GM12878 (cell line): ENCODE measurements at regions of chr10 and their contacts with region 1.

Region 1: DNA sequence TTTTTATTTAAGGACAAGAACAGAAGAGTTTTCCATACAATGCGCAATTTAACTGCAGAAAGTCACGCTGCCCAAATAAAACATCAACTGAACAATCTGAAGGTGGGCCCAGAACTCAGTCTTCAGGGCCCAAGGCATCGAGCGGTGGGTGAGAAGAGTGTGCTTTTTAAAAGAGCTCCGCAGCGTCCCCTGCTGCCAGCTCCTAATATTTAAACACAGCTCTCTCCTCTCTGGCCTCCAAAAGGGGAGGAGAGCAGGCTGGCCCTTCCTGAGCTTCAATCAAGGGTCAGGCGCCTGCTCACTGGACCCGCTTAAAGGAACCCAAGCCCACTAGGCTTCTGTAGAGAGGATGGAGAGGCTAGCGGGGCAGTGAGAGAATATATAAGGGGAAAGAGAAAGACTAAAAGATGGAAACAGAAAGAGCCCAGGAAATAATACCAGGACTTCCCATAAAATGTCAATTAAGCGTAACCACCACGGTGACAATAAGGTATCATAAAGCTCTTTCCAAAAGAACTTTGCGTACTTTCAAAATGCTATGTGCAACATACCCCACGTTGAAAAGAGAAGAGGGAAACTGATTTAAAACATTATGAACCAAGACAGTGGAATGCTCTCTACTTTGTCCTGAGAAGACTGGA is 2.8 kb downstream of the FAM53B start:
- DNase-seq: no peak
- ATAC-seq: peak; percentile 77
- H3K4me3 ChIP-seq: peak overlapping the region; percentile 84
- H3K27ac ChIP-seq: peak overlapping the region; percentile 57
- H3K4me1 ChIP-seq: peaks cover 48% of the 10 kb centered on the region
- H3K27me3 ChIP-seq: no peaks in the 10 kb centered on the region
- CTCF ChIP-seq: peak; percentile 81 to 91 (median 88); a peak in 5 of 6 replicates
- EP300 ChIP-seq: no peak
- POLR2A ChIP-seq: no peak
- RAD21 ChIP-seq: peak; percentile 86

Region 2: GRCh38 chr10:123994417-123995081 is 746.9 kb before region 1 on chr10:
- CTCF ChIA-PET with region 1: no interaction called
- POLR2A ChIA-PET with region 1: no interaction called
- RAD21 ChIA-PET with region 1: no interaction called
- SMC1A ChIA-PET with region 1: no interaction called
- in situ Hi-C with region 1: no loop called
- intact Hi-C with region 1: loop called (anchors 10 kb)
- DNase-seq: no peak
- ATAC-seq: peak; percentile 91
- H3K4me3 ChIP-seq: peak overlapping the region; percentile 35; the same call in 1 of the 2 replicates
- H3K27ac ChIP-seq: no peak overlapping the region
- H3K4me1 ChIP-seq: peaks cover 3% of the 10 kb centered on the region; the same call in 1 of the 2 replicates
- H3K27me3 ChIP-seq: peaks cover 3 to 7% of the 10 kb centered on the region in 2 experiments; a peak in 3 of 4 replicates
- CTCF ChIP-seq: peak; percentile 94 to 97 (median 94)
- EP300 ChIP-seq: no peak
- POLR2A ChIP-seq: no peak
- RAD21 ChIP-seq: peak; percentile 86

Region 3: DNA sequence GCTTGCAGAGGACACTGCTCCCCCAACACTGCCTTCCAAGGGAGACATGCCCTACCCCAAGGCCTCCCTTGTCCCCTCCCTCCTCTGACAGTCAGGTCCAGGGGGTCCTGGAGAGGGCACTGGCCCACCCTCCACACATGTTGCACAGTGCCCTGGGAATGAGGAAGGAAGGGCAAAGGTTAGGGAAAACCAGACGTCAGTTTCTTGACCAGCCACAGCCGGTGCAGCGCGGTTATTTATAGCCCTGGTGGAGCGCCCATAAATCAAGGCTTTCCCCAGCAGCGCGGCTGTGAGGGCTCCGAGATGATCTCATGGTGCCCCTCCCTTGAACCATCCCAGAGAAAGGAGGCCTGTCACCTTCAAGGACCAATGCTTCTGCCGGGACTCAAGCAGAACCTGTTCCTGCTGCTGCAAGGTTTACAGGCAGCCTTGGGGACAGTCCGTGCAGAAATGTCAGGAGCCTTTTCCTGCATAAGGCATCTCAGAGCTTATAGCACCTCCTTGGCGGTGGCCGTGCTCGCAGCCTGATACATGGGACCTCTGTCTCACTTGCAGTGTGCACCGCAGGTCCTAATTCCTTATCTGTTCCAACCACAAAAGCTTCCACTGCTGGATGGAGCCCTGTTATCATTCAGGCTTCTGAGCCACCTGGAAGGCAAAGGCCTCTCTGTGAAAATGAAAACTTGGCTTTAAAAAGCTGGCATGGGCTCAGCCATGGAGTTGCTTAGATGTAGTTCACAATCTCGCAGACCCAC is 152.5 kb before region 1 on chr10:
- CTCF ChIA-PET with region 1: interaction called, 4 read pairs
- POLR2A ChIA-PET with region 1: no interaction called
- RAD21 ChIA-PET with region 1: interaction called, 10 read pairs
- SMC1A ChIA-PET with region 1: interaction called, 4 read pairs
- in situ Hi-C with region 1: no loop called
- intact Hi-C with region 1: no loop called
- DNase-seq: no peak
- ATAC-seq: peak; percentile 38
- H3K4me3 ChIP-seq: no peak overlapping the region
- H3K27ac ChIP-seq: no peak overlapping the region
- H3K4me1 ChIP-seq: peaks cover 10% of the 10 kb centered on the region
- H3K27me3 ChIP-seq: no peaks in the 10 kb centered on the region; a peak in 1 of 4 replicates
- CTCF ChIP-seq: no peak
- EP300 ChIP-seq: no peak
- POLR2A ChIP-seq: no peak
- RAD21 ChIP-seq: no peak

Region 4: DNA sequence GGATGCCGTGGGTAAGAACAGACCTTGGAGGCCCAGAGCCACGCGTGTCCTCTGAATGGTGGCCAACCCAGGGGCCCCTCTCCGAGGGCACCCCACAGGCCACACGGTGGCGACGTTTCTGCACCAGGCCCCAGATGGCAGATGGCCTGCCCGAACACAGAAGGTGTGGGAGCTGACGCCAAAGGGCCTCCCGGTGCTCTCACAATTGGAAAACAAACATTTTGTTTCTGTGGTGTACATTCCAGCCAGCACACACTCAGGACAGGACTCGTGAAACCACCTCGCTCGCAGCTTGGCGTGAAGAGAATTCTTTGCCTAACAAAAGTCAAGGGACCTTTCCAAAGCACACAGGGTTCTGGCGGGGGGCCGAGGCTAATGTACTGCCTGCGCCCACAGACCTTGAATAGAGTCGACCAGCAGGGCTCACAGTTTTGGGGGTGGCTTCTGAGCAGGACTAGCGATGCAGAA is 109.3 kb before region 1 on chr10:
- CTCF ChIA-PET with region 1: interaction called, 44 read pairs
- POLR2A ChIA-PET with region 1: no interaction called
- RAD21 ChIA-PET with region 1: interaction called, 23 read pairs
- SMC1A ChIA-PET with region 1: interaction called, 6 read pairs
- in situ Hi-C with region 1: no loop called
- intact Hi-C with region 1: loop called (anchors 5 kb)
- DNase-seq: no peak
- ATAC-seq: peak; percentile 49
- H3K4me3 ChIP-seq: no peak overlapping the region
- H3K27ac ChIP-seq: no peak overlapping the region
- H3K4me1 ChIP-seq: peaks cover 6% of the 10 kb centered on the region
- H3K27me3 ChIP-seq: no peaks in the 10 kb centered on the region
- CTCF ChIP-seq: peak; percentile 5 to 27 (median 26); a peak in 1 of 6 replicates
- EP300 ChIP-seq: no peak
- POLR2A ChIP-seq: no peak
- RAD21 ChIP-seq: peak; percentile 40; the same call in 1 of the 2 replicates

Region 5: DNA sequence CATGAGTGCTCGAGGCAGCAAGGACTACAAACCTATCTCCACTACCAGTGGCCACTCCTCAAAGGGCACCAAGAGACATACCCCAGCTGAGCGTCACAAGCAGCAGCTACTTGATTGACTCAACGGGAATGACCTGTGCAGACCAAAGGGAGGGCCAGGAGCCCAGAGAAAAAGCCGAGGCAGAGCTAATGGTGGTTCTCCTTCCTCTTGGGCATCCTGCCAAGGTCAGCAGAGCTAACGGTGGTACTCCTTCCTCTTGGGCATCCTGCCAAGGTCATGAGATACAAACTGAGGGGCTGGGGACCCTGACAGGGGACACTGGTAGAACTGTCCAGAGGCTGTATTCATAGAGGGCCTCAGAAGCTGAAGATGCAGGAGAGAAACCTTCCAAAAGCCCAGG is 57.6 kb before region 1 on chr10:
- CTCF ChIA-PET with region 1: interaction called, 106 read pairs
- POLR2A ChIA-PET with region 1: interaction called, 46 read pairs
- RAD21 ChIA-PET with region 1: interaction called, 130 read pairs
- SMC1A ChIA-PET with region 1: interaction called, 133 read pairs
- in situ Hi-C with region 1: no loop called
- intact Hi-C with region 1: loop called (anchors 2 kb)
- DNase-seq: no peak
- ATAC-seq: no peak
- H3K4me3 ChIP-seq: no peak overlapping the region
- H3K27ac ChIP-seq: no peak overlapping the region
- H3K4me1 ChIP-seq: peaks cover 38% of the 10 kb centered on the region
- H3K27me3 ChIP-seq: no peaks in the 10 kb centered on the region
- CTCF ChIP-seq: no peak
- EP300 ChIP-seq: no peak
- POLR2A ChIP-seq: no peak
- RAD21 ChIP-seq: no peak

Region 6: GRCh38 chr10:124719213-124719851 is 22.1 kb before region 1 on chr10:
- CTCF ChIA-PET with region 1: interaction called, 319 read pairs
- POLR2A ChIA-PET with region 1: interaction called, 134 read pairs
- RAD21 ChIA-PET with region 1: interaction called, 360 read pairs
- SMC1A ChIA-PET with region 1: interaction called, 351 read pairs
- in situ Hi-C with region 1: no loop called
- intact Hi-C with region 1: loop called (anchors 1 kb)
- DNase-seq: peak; percentile 87
- ATAC-seq: peak; percentile 63
- H3K4me3 ChIP-seq: peak overlapping the region; percentile 57; the same call in 1 of the 2 replicates
- H3K27ac ChIP-seq: peak overlapping the region; percentile 71
- H3K4me1 ChIP-seq: peaks cover 69% of the 10 kb centered on the region
- H3K27me3 ChIP-seq: no peaks in the 10 kb centered on the region
- CTCF ChIP-seq: peak; percentile 56 to 72 (median 65)
- EP300 ChIP-seq: peak; percentile 75 to 88; a peak in 3 of 4 replicates
- POLR2A ChIP-seq: no peak
- RAD21 ChIP-seq: peak; percentile 65